CD4-positive, alpha-beta memory T cell (primary cell): ENCODE measurements at regions of chr18 and their contacts with region 1.

Region 1: DNA sequence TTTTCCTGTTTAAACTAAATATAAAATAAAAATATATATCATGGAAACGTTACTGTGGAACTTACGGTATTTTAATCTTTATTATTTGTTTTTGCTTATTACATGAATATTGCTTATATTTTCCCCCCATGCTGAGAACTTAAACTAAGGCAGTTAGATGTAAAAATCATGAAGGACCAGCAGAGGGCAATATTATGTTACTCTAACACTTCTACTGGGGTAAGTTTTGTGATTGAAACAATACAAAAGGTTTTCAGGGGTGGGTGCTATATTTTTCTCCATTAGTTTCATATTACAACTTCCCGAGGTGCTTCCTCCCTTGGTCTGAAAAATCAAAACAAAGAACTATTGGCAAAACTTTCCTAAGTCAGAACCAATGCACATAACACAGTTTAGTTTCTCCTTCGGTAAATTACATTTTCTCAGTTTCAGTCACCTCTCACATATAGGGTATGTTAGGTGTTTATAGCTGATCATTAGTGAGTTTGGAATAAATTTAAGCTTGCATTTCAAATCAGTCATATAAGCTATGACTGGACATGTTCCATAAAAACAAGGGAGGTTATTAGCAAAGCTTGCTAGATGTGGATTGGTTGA is 54.8 kb downstream of the ZNF407 start:
- DNase-seq: peak in 4 of 5 donors; percentile 27 to 34 (median 32)
- H3K4me3 ChIP-seq: no peak overlapping the region
- H3K4me3 Mint-ChIP-seq: no peak overlapping the region
- H3K27ac ChIP-seq: no peak overlapping the region
- H3K27ac Mint-ChIP-seq: no peak overlapping the region
- H3K4me1 ChIP-seq: no peaks in the 10 kb centered on the region
- H3K4me1 Mint-ChIP-seq: peaks cover 0 to 2% (median under 1%) of the 10 kb centered on the region in 4 donors
- H3K27me3 ChIP-seq: no peaks in the 10 kb centered on the region
- H3K27me3 Mint-ChIP-seq: no peaks in the 10 kb centered on the region

Region 2: DNA sequence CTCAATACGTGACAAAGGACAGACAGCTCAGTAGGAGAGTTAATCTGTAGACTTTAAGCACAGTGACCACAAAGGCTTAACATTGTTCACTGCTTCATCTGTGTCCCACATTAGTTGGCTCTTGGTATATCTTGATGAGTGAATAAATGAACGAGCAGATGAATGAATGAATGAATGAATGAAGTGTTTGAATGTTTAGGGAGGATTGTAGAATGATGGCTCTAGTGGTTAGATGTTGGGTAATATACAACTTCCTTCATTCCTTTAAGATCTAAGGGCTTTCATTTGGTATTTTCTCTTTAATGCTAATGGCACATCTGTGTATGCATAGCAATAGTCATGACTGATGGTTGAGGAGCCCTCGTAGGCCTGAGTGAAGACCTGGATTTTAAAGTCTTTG is 14.3 kb before region 1 on chr18:
- CTCF ChIA-PET with region 1: no interaction called
- POLR2A ChIA-PET with region 1: no interaction called
- intact Hi-C with region 1: no loop called
- DNase-seq: no peak
- H3K4me3 ChIP-seq: no peak overlapping the region
- H3K4me3 Mint-ChIP-seq: no peak overlapping the region
- H3K27ac ChIP-seq: no peak overlapping the region
- H3K27ac Mint-ChIP-seq: no peak overlapping the region
- H3K4me1 ChIP-seq: peaks cover 11% of the 10 kb centered on the region
- H3K4me1 Mint-ChIP-seq: peaks cover 4 to 21% (median 12%) of the 10 kb centered on the region in 4 donors
- H3K27me3 ChIP-seq: no peaks in the 10 kb centered on the region
- H3K27me3 Mint-ChIP-seq: no peaks in the 10 kb centered on the region

Region 3: DNA sequence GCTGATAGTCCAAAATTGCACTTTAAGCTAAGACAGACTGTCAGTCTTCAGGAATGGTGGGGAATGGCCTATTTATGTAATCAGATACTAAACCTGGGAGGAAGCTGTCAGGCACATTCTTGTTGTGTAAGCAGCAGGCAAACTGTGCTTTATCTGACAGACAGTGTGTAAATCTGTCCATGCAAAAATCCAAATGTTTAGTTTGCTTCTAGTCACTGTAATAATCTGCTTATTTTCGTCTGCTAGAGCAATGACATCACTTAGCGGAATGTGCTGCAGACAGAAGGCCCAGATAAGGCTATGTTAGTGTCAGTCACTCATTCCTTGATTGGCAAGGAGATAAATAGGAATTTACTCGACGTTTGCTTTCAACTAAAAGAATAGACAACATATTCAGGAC is 208.7 kb after region 1 on chr18:
- CTCF ChIA-PET with region 1: no interaction called
- POLR2A ChIA-PET with region 1: no interaction called
- intact Hi-C with region 1: no loop called
- DNase-seq: no peak
- H3K4me3 ChIP-seq: no peak overlapping the region
- H3K4me3 Mint-ChIP-seq: no peak overlapping the region
- H3K27ac ChIP-seq: no peak overlapping the region
- H3K27ac Mint-ChIP-seq: no peak overlapping the region
- H3K4me1 ChIP-seq: no peaks in the 10 kb centered on the region
- H3K4me1 Mint-ChIP-seq: peaks cover 0 to 4% (median 1%) of the 10 kb centered on the region in 4 donors
- H3K27me3 ChIP-seq: no peaks in the 10 kb centered on the region
- H3K27me3 Mint-ChIP-seq: no peaks in the 10 kb centered on the region

Region 4: GRCh38 chr18:74963820-74964446 is 311.4 kb after region 1 on chr18:
- CTCF ChIA-PET with region 1: no interaction called
- POLR2A ChIA-PET with region 1: no interaction called
- intact Hi-C with region 1: loop called (anchors 5 kb)
- DNase-seq: no peak
- H3K4me3 ChIP-seq: no peak overlapping the region
- H3K4me3 Mint-ChIP-seq: no peak overlapping the region
- H3K27ac ChIP-seq: no peak overlapping the region
- H3K27ac Mint-ChIP-seq: peak overlapping the region in 1 of 7 donors; percentile 27
- H3K4me1 ChIP-seq: no peaks in the 10 kb centered on the region
- H3K4me1 Mint-ChIP-seq: peaks cover 0 to 13% (median 4%) of the 10 kb centered on the region in 4 donors
- H3K27me3 ChIP-seq: no peaks in the 10 kb centered on the region
- H3K27me3 Mint-ChIP-seq: no peaks in the 10 kb centered on the region

Region 5: GRCh38 chr18:75247611-75248421 is 595.3 kb after region 1 on chr18:
- CTCF ChIA-PET with region 1: interaction called, 3 read pairs
- POLR2A ChIA-PET with region 1: no interaction called
- intact Hi-C with region 1: loop called (anchors 2 kb)
- DNase-seq: peak in 4 of 5 donors; percentile 51 to 61 (median 56)
- H3K4me3 ChIP-seq: peak overlapping the region; percentile 19 to 49
- H3K4me3 Mint-ChIP-seq: peak overlapping the region; percentile 80 to 91 (median 88)
- H3K27ac ChIP-seq: peak overlapping the region; percentile 46
- H3K27ac Mint-ChIP-seq: peak overlapping the region; percentile 88 to 98 (median 93)
- H3K4me1 ChIP-seq: peaks cover 51% of the 10 kb centered on the region
- H3K4me1 Mint-ChIP-seq: peaks cover 51 to 92% (median 70%) of the 10 kb centered on the region in 4 donors
- H3K27me3 ChIP-seq: no peaks in the 10 kb centered on the region
- H3K27me3 Mint-ChIP-seq: no peaks in the 10 kb centered on the region

Region 6: DNA sequence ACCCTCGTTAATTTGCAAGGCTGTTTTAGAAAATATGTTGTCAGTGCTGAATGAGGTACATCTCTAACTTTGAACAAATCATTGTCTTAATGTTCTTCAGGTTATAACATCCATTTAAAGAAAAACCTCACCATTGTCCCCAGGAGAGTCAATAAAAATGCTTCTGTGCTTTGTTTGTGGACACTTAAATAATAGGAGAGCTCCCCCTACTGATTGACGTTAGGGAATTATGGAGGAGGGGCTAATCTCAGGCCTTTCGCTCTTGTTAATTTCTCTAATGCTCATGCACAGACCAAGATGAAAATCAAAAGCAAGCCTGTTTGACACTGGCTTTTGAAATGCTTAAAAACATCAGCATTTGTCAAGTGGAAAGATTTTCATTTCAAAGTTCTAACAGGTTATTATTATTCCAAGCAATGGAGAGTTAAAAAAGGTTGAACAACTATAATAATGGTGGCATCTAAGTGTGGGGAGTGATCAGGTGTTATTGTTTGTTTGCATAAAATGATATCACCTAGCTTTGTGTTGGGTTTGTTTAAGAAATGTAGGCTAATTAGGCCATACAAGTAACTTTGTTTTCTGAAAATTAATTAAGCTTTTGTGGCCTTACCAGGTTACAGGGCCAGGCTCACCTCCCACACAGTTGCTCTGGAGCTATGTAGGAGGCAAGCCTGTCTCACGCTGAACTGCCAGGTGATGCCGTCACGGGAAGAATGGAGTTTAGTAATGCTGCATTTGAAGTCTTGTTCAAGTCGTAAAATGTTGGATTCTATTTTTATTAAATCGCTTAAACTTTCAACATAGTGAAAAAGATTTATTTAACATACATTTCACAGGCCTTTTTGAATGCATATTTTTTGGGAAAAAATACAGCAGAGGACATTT is 826.7 kb after region 1 on chr18:
- CTCF ChIA-PET with region 1: interaction called, 28 read pairs
- POLR2A ChIA-PET with region 1: no interaction called
- intact Hi-C with region 1: loop called (anchors 1 kb)
- DNase-seq: peak in 4 of 5 donors; percentile 41 to 48 (median 43)
- H3K4me3 ChIP-seq: no peak overlapping the region
- H3K4me3 Mint-ChIP-seq: no peak overlapping the region
- H3K27ac ChIP-seq: no peak overlapping the region
- H3K27ac Mint-ChIP-seq: no peak overlapping the region
- H3K4me1 ChIP-seq: no peaks in the 10 kb centered on the region
- H3K4me1 Mint-ChIP-seq: peaks cover 0 to 5% (median 0%) of the 10 kb centered on the region in 4 donors
- H3K27me3 ChIP-seq: no peaks in the 10 kb centered on the region
- H3K27me3 Mint-ChIP-seq: peaks cover 14 to 16% of the 10 kb centered on the region in 2 donors

Region 7: DNA sequence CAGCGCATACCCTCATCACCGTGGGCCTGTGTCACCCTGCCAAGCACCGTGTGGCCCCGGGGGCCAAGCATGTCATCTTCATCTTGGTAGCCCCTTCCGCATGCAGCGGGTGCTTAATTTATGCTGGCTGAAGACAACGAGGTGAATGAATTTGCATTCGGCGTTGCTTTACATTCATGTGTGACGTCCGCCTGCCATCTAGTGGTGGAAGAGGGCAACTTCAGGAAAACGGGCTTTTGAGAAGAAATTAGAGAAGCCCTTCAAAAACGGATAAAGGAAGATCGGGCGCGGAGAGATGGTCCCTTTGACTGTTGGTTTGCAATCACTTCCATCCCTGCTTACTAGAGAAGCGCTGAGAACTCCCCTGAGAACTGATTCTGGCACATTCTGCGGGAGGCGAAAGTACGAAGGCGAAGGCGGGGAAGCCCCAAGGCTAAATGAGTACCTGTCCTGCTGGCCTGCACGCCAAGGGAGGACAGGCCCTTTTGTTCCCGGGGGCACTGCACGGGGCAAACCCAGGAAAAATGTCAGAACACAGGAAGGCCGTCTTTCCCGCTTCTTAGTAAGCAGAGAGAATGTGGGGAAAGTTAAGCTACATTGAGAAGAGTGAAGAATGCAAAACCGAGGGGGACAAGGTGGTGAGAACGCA is 1696.7 kb after region 1 on chr18:
- CTCF ChIA-PET with region 1: no interaction called
- POLR2A ChIA-PET with region 1: no interaction called
- intact Hi-C with region 1: loop called (anchors 1 kb)
- DNase-seq: peak; percentile 44 to 55 (median 51)
- H3K4me3 ChIP-seq: no peak overlapping the region
- H3K4me3 Mint-ChIP-seq: peak overlapping the region in 1 of 8 donors; percentile 25
- H3K27ac ChIP-seq: no peak overlapping the region
- H3K27ac Mint-ChIP-seq: peak overlapping the region in 2 of 7 donors; percentile 48 to 74
- H3K4me1 ChIP-seq: no peaks in the 10 kb centered on the region
- H3K4me1 Mint-ChIP-seq: peaks cover 3 to 7% (median 5%) of the 10 kb centered on the region in 4 donors
- H3K27me3 ChIP-seq: no peaks in the 10 kb centered on the region
- H3K27me3 Mint-ChIP-seq: no peaks in the 10 kb centered on the region